T-cell (primary cell): ENCODE measurements at regions of chr17 and their contacts with region 1.

Region 1: GRCh38 chr17:74368092-74369081 is 1.1 kb downstream of the GPR142 start:
- DNase-seq: peak; percentile 22 to 85 (median 65)
- ATAC-seq: peak; percentile 69 to 81 (median 76)
- H3K4me3 ChIP-seq: peak overlapping the region; percentile 16 to 32
- H3K4me3 Mint-ChIP-seq: peak overlapping the region; percentile 31 to 69 (median 43)
- H3K27ac ChIP-seq: no peak overlapping the region
- H3K27ac Mint-ChIP-seq: no peak overlapping the region
- H3K4me1 ChIP-seq: peaks cover 15 to 22% of the 10 kb centered on the region in 2 experiments
- H3K4me1 Mint-ChIP-seq: peaks cover 15 to 17% (median 15%) of the 10 kb centered on the region in 3 donors
- H3K27me3 ChIP-seq: peaks cover 0 to 49% of the 10 kb centered on the region in 2 experiments
- H3K27me3 Mint-ChIP-seq: peaks cover 6 to 10% of the 10 kb centered on the region in 2 donors

Region 2: DNA sequence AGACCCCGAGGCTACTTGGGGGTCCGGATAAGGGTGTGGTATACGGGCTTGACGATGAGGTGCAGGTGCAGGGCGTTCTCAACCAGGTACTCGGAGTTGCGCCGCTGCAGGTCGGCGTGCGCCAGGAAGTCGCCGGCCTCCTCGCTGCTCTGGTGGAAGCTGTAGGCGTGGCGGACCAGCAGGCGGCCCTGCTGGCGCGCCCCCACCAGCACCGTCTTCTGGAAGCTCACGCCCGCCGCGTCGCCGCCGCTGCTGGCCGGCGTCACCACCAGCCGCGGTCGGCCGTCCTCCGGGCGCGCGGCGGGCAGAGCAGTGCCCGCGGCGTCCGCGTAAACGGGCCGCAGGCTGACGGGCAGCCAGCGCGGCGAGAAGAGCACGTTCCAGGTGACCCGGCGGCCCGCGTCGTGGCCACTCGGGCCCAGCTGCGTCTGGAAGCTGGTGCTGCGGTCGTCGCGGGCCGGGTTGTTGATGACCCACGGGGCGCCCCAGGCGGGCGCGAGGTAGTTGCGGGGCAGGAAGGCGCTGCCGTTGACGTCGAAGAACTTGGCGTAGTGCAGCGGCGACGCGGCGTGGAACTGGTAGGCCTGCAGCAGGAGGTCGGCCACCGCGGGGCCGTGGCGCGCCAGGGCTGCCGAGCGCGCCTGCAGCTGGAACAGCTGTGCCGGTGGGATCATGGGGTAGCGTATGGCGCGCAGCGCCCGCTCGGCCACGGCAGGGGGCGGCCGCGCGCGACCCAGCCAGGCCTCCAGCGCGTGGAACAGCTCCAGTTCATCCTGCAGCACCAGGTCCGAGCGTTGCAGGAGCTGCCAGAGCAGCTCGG is 11.5 kb before region 1 on chr17:
- CTCF ChIA-PET with region 1: interaction called, 4 to 13 read pairs
- POLR2A ChIA-PET with region 1: no interaction called
- DNase-seq: peak in 7 of 35 experiments; percentile 10 to 37 (median 18)
- ATAC-seq: peak; percentile 39 to 58 (median 46)
- H3K4me3 ChIP-seq: peak overlapping the region in 1 of 2 donors; percentile 38
- H3K4me3 Mint-ChIP-seq: peak overlapping the region in 2 of 3 donors; percentile 17 to 29
- H3K27ac ChIP-seq: no peak overlapping the region
- H3K27ac Mint-ChIP-seq: no peak overlapping the region
- H3K4me1 ChIP-seq: peaks cover 0 to 32% of the 10 kb centered on the region in 2 experiments
- H3K4me1 Mint-ChIP-seq: peaks cover 6 to 10% (median 9%) of the 10 kb centered on the region in 3 donors
- H3K27me3 ChIP-seq: peaks cover 0 to 93% of the 10 kb centered on the region in 2 experiments
- H3K27me3 Mint-ChIP-seq: peaks cover 38 to 71% of the 10 kb centered on the region in 2 donors

Region 3: DNA sequence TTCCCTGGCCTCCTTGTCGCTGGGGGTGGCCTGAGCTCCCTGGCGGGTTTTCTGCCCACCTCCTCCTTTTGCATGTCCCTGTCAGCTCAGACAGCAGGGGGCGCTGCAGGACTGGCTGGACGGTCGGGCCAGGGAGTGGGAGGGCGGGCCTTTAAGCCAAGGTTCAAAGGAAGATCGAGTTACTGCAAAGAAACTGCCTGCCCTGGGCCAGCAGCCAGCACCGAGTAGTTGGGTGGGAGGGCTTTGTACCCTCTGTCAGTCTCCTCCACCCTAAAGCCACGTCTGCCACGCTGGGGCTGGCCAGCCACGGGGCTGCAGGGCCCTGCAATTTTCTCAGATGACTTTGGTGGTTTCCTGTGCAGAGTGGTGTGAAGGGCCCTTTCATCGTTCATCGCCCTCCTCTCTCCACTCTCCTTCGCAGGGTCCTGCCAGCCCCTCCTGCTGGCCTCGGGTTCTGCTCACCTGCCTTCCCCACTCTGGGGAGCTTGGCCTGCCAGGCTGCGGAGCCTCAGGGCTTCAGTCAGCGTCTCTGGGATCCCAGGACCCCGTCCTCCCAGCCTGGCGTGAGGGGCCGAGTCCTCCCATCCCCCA is 11.2 kb after region 1 on chr17:
- CTCF ChIA-PET with region 1: interaction called, 4 to 12 read pairs
- POLR2A ChIA-PET with region 1: no interaction called
- DNase-seq: peak; percentile 71 to 93 (median 88)
- ATAC-seq: peak; percentile 88 to 96 (median 88)
- H3K4me3 ChIP-seq: peak overlapping the region in 1 of 2 donors; percentile 6
- H3K4me3 Mint-ChIP-seq: peak overlapping the region in 1 of 3 donors; percentile 10
- H3K27ac ChIP-seq: no peak overlapping the region
- H3K27ac Mint-ChIP-seq: no peak overlapping the region
- H3K4me1 ChIP-seq: peaks cover 3 to 21% of the 10 kb centered on the region in 2 experiments
- H3K4me1 Mint-ChIP-seq: peaks cover 0 to 11% (median 3%) of the 10 kb centered on the region in 3 donors
- H3K27me3 ChIP-seq: peaks cover 0 to 17% of the 10 kb centered on the region in 2 experiments
- H3K27me3 Mint-ChIP-seq: no peaks in the 10 kb centered on the region

Region 4: DNA sequence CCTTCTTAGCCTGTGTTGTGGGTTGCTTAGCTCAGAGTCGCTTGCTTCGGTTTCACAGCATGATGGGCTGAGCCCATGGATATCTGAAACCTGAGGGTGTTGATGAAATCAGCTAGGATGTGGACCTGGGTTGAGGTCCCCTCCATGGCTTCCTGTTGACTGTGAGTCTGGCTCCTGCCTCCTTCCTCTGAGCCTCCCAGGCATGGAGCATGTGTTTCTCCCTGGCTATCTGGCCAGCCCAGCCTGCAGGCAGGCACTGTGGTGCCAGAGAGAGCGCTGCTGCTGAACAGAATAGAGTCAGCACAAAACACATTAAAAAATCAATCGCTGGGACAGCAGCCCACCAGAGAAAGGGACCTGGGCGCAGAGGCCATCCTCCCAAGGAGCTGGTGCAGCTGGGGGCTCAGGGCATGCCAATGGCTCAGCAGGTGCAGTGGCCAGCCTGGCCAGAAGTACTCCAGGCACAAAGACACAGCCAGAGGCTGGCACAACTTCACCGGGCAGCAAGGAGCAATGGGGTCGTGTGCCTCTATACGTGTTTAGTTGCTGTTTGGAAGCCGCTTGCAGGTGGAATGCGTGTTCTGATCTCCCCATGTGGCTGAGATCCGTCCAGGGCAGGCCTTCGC is 35.2 kb after region 1 on chr17:
- CTCF ChIA-PET with region 1: no interaction called
- POLR2A ChIA-PET with region 1: no interaction called
- DNase-seq: no peak
- ATAC-seq: no peak
- H3K4me3 ChIP-seq: no peak overlapping the region
- H3K4me3 Mint-ChIP-seq: no peak overlapping the region
- H3K27ac ChIP-seq: no peak overlapping the region
- H3K27ac Mint-ChIP-seq: no peak overlapping the region
- H3K4me1 ChIP-seq: no peaks in the 10 kb centered on the region
- H3K4me1 Mint-ChIP-seq: peaks cover 0 to 4% (median 0%) of the 10 kb centered on the region in 3 donors
- H3K27me3 ChIP-seq: peaks cover 0 to 8% of the 10 kb centered on the region in 2 experiments
- H3K27me3 Mint-ChIP-seq: peaks cover 0 to 6% of the 10 kb centered on the region in 2 donors

Region 5: DNA sequence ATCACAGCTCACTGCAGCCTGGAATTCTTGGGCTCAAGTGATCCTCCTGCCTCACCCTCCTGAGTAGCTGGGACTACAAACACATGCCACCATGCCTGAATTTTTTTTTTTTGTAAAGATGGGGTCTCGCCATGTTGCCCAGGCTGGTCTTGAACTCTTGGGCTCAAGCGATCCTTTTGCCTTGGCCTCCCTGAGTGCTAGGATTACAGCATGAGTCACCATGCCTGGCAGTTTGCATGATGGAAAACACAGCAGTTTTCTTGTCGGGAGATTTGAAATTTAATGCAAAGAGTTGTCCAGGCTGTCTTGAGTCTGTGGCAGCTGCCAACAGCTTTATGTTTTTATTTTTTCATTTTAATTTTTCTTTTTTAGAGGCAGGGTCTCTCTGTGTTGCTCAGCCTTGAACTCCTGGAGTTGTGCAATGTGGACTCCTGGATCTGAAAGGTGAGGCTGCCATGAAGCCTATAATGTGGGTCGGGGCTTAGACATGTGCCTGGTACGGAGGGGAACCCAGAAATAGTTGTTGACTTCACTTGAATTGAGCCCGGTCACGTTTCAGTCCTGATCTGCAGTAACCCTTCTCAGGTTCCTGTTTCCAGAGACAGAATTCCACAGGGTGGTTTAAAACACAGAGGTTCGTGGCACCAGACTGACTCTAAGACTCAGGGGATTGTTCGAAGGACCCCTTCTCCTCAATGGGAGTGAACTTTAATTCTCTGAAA is 116.8 kb after region 1 on chr17:
- CTCF ChIA-PET with region 1: no interaction called
- POLR2A ChIA-PET with region 1: no interaction called
- DNase-seq: no peak
- ATAC-seq: no peak
- H3K4me3 ChIP-seq: no peak overlapping the region
- H3K4me3 Mint-ChIP-seq: no peak overlapping the region
- H3K27ac ChIP-seq: no peak overlapping the region
- H3K27ac Mint-ChIP-seq: peak overlapping the region in 1 of 2 donors; percentile 43
- H3K4me1 ChIP-seq: peaks cover 0 to 16% of the 10 kb centered on the region in 2 experiments
- H3K4me1 Mint-ChIP-seq: peaks cover 4 to 19% (median 9%) of the 10 kb centered on the region in 3 donors
- H3K27me3 ChIP-seq: no peaks in the 10 kb centered on the region
- H3K27me3 Mint-ChIP-seq: no peaks in the 10 kb centered on the region